ENCODE measurements at regions of chr3 and their contacts with region 1.

Region 1: DNA sequence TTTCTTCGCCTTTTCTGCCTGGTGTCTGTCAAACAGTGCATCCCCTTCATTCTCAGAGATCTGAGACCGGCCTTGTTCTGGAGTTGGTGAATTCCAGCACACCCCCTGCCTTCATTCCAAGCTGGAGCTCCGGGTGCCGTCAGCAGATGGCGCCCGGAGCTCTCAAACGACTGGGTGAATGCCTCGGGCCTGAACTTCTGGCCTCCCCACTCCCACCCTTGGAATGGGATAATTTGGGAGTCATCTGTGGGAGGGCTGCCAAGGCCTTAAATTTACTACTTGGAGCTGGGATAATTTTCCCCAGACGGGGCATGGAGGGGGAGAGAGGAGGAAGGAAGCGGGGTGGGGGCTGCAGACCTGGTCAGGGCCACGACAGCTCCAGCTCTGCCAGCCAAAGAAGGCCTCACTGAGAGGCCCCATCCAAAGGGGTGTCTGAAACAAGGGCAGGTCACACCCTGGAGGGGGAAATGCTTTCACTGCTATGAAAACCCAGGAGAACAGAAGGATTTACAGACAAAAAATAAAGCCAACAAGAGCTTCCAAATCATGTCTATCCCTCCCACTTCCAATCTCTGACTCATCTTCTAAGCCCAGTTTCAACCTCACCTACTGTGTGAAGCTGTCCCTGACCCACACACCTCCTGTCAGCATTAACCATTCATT is 187.9 kb downstream of the OPA1 start:
- H3K4me3 ChIP-seq: no peak overlapping the region
- H3K27ac ChIP-seq: peak overlapping the region; percentile 42; the same call in 1 of the 2 replicates
- H3K4me1 ChIP-seq: peaks cover 8% of the 10 kb centered on the region
- CTCF ChIP-seq: no peak

Region 2: GRCh38 chr3:192675958-192676649 is 1104.8 kb before region 1 on chr3:
- CTCF ChIA-PET with region 1: no interaction called
- POLR2A ChIA-PET with region 1: no interaction called
- H3K4me3 ChIP-seq: no peak overlapping the region
- H3K27ac ChIP-seq: no peak overlapping the region
- H3K4me1 ChIP-seq: no peaks in the 10 kb centered on the region
- CTCF ChIP-seq: no peak

Region 3: DNA sequence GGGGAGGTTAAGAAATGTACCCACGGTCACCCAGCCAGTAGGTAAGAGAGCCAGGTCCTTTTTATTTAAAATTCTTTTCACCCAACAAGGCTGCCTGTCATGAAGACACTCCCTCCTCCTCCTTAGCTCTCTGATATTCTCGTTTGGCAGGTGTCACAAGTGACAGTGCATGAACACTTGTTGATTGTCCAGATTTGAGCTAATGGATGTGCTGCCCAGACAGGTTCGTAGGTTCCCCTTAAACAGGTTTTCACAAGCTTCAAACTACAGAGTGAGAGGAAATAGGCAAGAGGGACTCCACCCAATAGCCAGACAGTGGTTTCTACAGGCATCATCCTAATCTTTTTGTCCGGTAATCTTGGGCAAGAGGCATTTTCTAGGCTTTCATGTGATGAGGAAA is 258.5 kb before region 1 on chr3:
- CTCF ChIA-PET with region 1: no interaction called
- POLR2A ChIA-PET with region 1: no interaction called
- H3K4me3 ChIP-seq: no peak overlapping the region
- H3K27ac ChIP-seq: no peak overlapping the region
- H3K4me1 ChIP-seq: no peaks in the 10 kb centered on the region
- CTCF ChIP-seq: no peak

Region 4: DNA sequence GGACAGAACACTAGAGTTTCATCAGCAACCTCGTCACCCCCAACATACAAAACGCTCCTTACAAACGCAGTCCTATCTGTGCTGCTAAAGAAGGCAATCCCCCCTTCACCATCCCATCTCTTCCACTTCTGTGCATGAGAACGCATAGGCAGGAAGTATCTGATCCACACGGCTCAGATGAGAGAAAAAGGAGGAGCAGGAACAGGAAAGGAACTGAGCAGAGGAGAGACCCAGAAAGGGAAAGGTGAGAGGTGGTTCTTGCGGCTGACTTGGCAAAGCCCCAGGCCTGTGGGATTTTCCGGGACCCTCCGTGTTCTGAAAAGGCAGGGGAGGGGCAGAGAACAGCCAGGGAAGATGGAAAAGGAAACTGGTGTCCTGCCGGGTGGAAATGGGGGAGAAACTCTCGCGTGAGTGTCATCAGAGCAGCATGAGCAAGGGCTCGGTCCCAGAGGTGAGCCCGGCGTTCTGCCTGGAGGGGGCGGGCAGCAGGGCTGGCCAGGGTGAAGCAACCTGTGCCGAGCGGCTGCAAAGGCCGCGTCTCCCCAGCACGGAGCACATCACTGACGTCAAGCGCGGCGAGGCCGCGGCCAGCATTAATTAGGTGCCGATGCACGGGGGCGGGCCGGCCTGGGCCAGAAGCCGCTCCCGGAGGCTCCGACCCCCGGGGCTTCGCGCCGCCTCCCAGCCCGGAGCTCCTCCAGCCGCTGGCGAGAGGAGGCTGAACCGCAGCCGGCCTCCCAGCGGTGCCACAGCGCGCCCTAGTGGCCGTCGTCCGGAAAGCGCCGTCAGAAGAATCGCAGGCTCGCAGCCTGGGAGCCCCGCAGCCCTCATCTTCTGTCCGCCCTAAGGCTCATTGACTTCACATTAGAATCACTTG is 534.4 kb after region 1 on chr3:
- CTCF ChIA-PET with region 1: interaction called, 40 read pairs
- POLR2A ChIA-PET with region 1: interaction called, 13 read pairs
- H3K4me3 ChIP-seq: peak overlapping the region; percentile 33
- H3K27ac ChIP-seq: peak overlapping the region; percentile 83
- H3K4me1 ChIP-seq: no peaks in the 10 kb centered on the region; the same call in 1 of the 2 replicates
- CTCF ChIP-seq: peak; percentile 88

Measured in HEK293 (cell line).